ENCODE measurements at regions of chr7 and their contacts with region 1.

Region 1: DNA sequence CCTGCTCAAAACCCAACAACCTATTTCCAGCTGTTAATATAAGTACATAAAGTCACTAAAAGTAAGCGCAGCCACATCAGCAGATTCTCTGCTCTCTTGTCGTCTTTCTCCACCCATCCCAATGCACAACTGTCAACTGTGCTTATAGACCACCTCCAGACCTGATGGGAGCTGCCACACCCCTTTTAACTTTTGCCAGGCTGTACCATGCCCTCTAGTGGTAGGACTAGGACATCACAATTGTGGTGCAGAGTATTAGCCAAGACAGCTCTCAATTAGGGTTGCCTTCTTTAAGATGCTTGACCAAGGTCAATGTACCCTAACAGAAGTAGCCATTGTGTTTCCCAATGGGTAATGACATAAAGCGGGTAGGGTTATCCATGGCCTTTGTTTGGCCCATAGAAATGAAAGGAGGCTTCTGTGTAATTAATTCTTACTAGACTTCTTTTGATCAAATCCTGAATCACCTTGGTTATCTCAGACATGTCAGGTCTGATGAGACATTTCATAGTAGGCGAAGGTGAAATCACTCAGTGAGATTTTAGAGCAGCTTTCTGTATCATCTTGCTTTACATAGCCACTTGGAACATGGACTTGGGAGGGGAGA is 68.1 kb downstream of the SCRN1 start:
- DNase-seq: peak; percentile 78

Region 2: DNA sequence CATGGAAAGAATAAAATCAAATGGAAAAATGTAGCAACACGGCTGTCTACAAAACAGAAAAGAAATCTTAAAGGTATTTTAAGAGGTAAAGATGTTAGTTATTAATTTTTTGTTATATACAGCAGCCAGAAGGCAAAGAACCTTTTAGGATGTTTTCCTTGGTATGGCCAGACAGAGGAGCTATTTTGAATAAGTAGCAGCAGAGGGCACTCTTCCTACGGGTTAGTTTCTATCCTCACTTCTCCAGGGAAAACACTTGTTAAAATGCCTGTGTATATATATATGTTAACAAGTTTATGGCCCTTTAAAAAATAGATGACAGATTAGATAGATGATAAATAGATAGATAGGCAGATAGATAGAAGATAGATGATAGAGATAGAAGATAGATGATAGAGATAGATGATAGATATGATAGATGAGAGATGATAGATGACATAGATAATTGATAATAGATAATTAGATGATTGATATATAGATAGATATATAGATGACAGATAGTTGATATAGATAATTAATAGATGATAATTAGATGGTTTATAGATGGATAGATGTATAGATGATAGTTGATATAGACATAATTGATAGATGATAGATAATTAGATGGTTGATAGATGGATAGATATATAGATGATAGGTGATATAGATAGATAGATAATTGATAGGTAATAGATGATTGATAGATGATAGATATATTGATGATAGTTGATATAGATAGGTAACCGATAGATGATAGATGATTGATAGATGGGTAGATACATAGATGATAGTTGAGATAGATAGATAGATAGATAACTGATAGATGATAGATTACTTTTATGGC is 173.0 kb before region 1 on chr7:
- CTCF ChIA-PET with region 1: interaction called, 12 read pairs
- POLR2A ChIA-PET with region 1: no interaction called
- DNase-seq: no peak

Measured in HEK293T (cell line).